Ovary (tissue), 10 donors: ENCODE measurements at regions of chr14 and their contacts with region 1.

Region 1: DNA sequence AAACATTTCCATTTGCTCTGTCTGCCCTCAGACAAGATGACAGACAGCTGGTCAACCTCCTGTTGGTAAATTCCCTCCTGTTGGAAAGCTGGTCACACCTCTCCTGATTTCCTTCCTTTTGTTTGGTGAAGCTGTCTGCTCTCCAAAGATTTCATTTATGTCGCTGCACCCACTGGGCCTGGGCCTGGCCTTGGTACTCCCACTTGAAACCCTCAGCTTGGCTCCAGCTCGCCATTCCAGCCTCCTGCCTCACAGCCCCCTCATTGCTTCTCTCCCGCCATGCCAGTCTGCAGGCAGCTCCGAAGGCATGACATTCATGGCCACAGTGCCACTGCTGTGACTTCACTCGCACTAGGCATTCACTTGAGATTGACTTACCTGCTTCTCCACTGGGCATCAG is 451.8 kb downstream of the VRK1 start:
- DNase-seq: no peak
- H3K4me3 ChIP-seq: no peak overlapping the region
- H3K27ac ChIP-seq: no peak overlapping the region
- H3K4me1 ChIP-seq: no peaks in the 10 kb centered on the region
- H3K27me3 ChIP-seq: no peaks in the 10 kb centered on the region
- CTCF ChIP-seq: no peak
- EP300 ChIP-seq: no peak
- POLR2A ChIP-seq: no peak

Region 2: GRCh38 chr14:97306760-97307246 is 57.8 kb after region 1 on chr14:
- intact Hi-C with region 1: no loop called
- DNase-seq: no peak
- H3K4me3 ChIP-seq: no peak overlapping the region
- H3K27ac ChIP-seq: no peak overlapping the region
- H3K4me1 ChIP-seq: no peaks in the 10 kb centered on the region
- H3K27me3 ChIP-seq: no peaks in the 10 kb centered on the region
- CTCF ChIP-seq: no peak
- EP300 ChIP-seq: no peak
- POLR2A ChIP-seq: no peak

Region 3: DNA sequence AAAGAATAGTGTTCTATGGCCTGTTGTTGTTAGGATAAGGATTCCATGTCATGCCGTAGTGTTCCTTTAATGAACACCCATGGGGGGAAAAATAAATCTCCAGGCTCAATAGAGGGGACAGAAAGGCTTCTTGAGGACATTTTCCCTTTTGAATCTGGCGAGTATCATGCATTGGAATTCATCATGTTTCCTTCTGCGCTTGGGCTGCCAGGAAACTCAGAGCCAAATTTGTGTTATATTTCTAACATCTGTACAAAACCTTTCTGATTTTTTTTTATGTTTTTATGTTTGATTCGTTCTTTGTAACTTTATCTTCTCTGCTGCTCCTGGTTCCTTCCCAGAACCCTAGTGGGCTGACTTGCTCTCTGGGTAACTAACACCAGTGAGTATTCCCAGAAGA is 711.5 kb after region 1 on chr14:
- intact Hi-C with region 1: loop called in 1 of 4 experiments (anchors 10 kb)
- DNase-seq: no peak
- H3K4me3 ChIP-seq: no peak overlapping the region
- H3K27ac ChIP-seq: no peak overlapping the region
- H3K4me1 ChIP-seq: no peaks in the 10 kb centered on the region
- H3K27me3 ChIP-seq: no peaks in the 10 kb centered on the region
- CTCF ChIP-seq: no peak
- EP300 ChIP-seq: no peak
- POLR2A ChIP-seq: no peak